ENCODE measurements at regions of chr17 and their contacts with region 1.

Region 1: DNA sequence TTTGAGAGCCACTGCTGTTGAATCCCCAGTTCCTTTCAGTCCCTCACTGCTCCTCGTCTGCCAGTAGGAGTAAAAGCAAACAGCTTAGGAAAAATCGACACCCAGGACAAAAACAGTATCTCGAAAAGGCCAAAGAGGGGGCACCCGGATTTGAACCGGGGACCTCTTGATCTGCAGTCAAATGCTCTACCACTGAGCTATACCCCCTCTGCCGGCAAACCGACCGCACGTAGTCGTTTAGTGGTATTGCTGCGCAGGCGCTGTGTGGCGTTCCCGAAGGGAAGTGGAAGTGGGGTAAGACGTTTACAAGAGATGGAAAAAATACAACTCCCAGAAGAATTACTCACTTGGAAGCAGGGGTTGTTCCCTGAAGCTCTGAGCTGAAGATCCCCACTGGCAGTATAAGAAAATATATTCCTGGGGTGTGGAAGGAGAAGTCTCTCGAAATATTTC is 2.2 kb upstream of the PLXDC1 start:
- H3K4me3 ChIP-seq: peak overlapping the region; percentile 62
- H3K27ac ChIP-seq: peak overlapping the region; percentile 79
- H3K4me1 ChIP-seq: peaks cover 3% of the 10 kb centered on the region
- CTCF ChIP-seq: 0 out of 2 replicates have a peak, but pooled peaks have one; percentile 4

Region 2: GRCh38 chr17:38868817-38869525 is 284.7 kb before region 1 on chr17:
- CTCF ChIA-PET with region 1: interaction called, 13 read pairs
- POLR2A ChIA-PET with region 1: interaction called, 42 read pairs
- H3K4me3 ChIP-seq: peak overlapping the region; percentile 94
- H3K27ac ChIP-seq: peak overlapping the region; percentile 96
- H3K4me1 ChIP-seq: peaks cover 9% of the 10 kb centered on the region
- CTCF ChIP-seq: peak; percentile 93

Region 3: DNA sequence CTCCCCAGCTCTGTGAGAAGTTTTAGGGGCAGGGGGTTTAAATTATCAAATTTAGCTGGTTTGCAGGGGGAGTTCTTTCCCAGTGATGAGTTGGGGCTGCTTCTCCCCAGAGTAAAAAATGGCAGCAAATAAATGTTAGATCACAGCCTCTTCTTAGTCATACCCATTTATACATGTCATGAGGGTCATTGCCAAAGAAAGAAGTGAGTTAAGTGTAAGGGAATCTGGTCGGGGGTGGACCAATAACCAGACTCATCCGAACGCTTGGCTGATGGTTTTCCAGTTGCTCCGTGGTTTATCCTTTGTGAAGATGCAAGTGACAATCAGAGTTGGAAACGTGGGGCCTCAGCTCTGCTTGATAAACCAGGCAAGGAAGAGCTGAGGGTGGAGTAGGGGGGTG is 89.3 kb before region 1 on chr17:
- CTCF ChIA-PET with region 1: interaction called, 14 read pairs
- POLR2A ChIA-PET with region 1: no interaction called
- H3K4me3 ChIP-seq: no peak overlapping the region
- H3K27ac ChIP-seq: no peak overlapping the region
- H3K4me1 ChIP-seq: peaks cover 19% of the 10 kb centered on the region
- CTCF ChIP-seq: no peak

Region 4: DNA sequence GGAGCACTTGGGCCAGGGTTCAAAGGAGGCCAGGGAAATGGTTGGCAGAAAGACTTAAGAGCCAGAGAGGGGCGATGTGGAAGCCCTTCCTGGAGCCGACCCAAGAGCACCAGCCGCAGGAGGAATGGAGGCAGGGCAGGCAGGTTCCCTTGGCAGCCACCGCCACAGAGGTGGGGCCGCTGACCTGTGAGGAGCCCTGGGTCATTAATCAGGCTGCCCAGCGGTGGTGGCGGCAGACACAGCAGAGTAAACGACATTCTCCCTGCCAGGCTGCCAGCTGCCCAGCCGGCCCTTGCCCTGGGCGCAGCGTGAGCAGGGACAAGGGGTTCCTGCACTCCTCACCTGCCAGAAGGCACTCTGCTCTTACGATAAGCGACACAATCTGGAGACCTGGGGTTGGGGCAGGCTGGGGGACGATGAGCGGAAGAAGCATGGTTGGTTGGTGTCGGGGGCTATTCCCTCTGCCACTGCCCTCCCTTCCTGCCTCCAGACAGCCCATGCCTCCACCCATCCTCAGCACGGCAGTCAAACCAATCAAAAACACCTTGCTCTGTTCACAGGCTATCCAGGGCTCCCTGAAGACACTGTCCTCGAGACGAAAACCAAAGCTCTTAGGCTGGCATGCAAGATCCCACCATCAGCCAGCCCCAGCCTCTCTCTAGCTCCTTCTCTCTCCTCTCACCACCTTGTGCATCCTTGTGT is 43.0 kb before region 1 on chr17:
- CTCF ChIA-PET with region 1: no interaction called
- POLR2A ChIA-PET with region 1: no interaction called
- H3K4me3 ChIP-seq: no peak overlapping the region
- H3K27ac ChIP-seq: no peak overlapping the region
- H3K4me1 ChIP-seq: no peaks in the 10 kb centered on the region
- CTCF ChIP-seq: no peak

Region 5: GRCh38 chr17:39164675-39165143 is 11.1 kb after region 1 on chr17:
- CTCF ChIA-PET with region 1: interaction called, 50 read pairs
- POLR2A ChIA-PET with region 1: interaction called, 25 read pairs
- H3K4me3 ChIP-seq: no peak overlapping the region
- H3K27ac ChIP-seq: no peak overlapping the region
- H3K4me1 ChIP-seq: 0 out of 2 replicates have a peak, but pooled peaks cover 4% of the 10 kb centered on the region
- CTCF ChIP-seq: peak; percentile 90

Region 6: GRCh38 chr17:39199820-39200069 is 46.1 kb after region 1 on chr17:
- CTCF ChIA-PET with region 1: interaction called, 7 read pairs
- POLR2A ChIA-PET with region 1: interaction called, 12 read pairs
- H3K4me3 ChIP-seq: peak overlapping the region; percentile 96
- H3K27ac ChIP-seq: peak overlapping the region; percentile 99
- H3K4me1 ChIP-seq: peaks cover 17% of the 10 kb centered on the region; the same call in 1 of the 2 replicates
- CTCF ChIP-seq: no peak

Measured in HEK293 (cell line).